ENCODE measurements at regions of chr6 and their contacts with region 1.

Region 1: DNA sequence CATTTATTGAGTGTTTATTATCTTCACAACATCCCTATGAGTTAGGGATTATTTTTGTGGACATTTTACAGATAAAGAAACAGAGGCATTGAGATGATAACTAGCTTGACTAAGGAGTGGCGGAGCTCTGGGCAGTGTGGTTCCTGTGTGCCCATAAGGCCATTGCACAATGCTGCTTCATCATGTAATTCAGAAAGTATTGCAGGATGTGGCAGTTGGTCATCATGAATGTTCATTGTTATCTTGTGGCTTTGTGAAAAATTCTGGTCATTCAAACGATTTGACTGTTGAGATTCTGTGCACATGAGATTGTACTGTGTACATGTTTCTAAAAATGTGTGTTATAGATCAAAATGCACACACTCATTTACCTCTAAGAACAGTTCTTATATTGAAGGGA is 150.8 kb downstream of the ESR1 start:
- DNase-seq: peak; percentile 67
- H3K4me3 Mint-ChIP-seq: no peak overlapping the region
- H3K27ac Mint-ChIP-seq: no peak overlapping the region
- H3K4me1 Mint-ChIP-seq: peaks cover 8% of the 10 kb centered on the region
- H3K27me3 Mint-ChIP-seq: no peaks in the 10 kb centered on the region
- CTCF ChIP-seq: no peak

Region 2: GRCh38 chr6:152232501-152233151 is 274.3 kb after region 1 on chr6:
- CTCF ChIA-PET with region 1: no interaction called
- POLR2A ChIA-PET with region 1: no interaction called
- intact Hi-C with region 1: no loop called
- DNase-seq: no peak
- H3K4me3 Mint-ChIP-seq: no peak overlapping the region
- H3K27ac Mint-ChIP-seq: no peak overlapping the region
- H3K4me1 Mint-ChIP-seq: no peaks in the 10 kb centered on the region
- H3K27me3 Mint-ChIP-seq: no peaks in the 10 kb centered on the region
- CTCF ChIP-seq: no peak

Region 3: GRCh38 chr6:152259234-152259633 is 300.9 kb after region 1 on chr6:
- CTCF ChIA-PET with region 1: no interaction called
- POLR2A ChIA-PET with region 1: no interaction called
- intact Hi-C with region 1: loop called (anchors 5 kb)
- DNase-seq: no peak
- H3K4me3 Mint-ChIP-seq: no peak overlapping the region
- H3K27ac Mint-ChIP-seq: no peak overlapping the region
- H3K4me1 Mint-ChIP-seq: no peaks in the 10 kb centered on the region
- H3K27me3 Mint-ChIP-seq: no peaks in the 10 kb centered on the region
- CTCF ChIP-seq: no peak